ENCODE measurements at regions of chr3 and their contacts with region 1.

Region 1: DNA sequence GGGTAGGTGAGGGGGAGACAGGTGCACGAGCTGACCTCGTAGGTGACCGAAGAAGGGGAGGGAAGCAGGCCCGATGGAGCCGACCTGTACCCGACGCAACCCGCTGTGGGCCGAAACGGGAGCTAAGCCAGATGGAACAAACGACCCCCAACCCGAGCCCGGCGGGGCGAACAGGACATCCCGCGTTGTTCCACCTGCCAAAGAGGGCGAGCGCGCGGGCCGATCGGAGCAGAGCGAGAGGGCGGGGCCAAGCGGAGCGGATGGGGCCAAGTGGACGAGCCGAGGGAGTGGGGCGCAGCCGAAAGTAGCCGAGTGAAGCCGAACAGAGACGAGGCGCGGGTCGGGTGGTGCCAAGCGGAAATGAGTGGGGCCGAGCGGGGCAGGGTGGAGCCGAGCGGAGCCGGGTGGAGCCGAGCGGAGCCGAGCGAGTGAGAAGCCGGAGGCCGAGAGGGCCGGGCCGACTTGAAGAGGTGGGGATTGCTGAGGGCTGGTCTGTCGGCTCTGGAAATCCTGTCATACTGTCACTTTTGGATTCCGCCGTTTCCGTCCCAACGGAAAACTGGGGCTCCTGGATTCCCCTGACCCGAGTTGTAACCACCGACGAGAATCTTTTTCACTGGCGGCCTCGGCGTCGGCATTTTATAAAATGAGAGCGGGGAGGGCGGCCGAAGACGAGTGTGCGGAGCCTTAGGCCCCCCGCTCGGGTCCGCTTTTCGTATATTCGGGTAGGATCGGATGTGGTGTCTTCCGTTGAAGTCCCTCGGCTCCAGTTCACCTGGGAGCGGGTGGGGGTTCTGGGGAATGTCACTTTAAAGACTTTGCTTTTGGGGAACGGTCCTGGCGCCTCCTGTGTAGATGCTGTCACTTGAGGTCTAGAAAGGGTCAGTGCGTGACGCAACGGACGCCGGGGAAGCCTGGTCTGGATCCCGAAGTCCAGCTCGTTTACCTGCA is 15.6 kb upstream of the WNT7A start:
- DNase-seq: peak; percentile 77 to 86
- ATAC-seq: peak; percentile 88 to 89
- H3K4me3 ChIP-seq: peak overlapping the region; percentile 56 to 80 (median 66)
- H3K27ac ChIP-seq: peak overlapping the region; percentile 16 to 71 (median 49)
- H3K4me1 ChIP-seq: peaks cover 9 to 12% of the 10 kb centered on the region in 2 donors
- H3K27me3 ChIP-seq: peaks cover 0 to 2% (median 0%) of the 10 kb centered on the region in 3 donors
- CTCF ChIP-seq: no peak
- POLR2A ChIP-seq: peak; percentile 68 to 70

Region 2: DNA sequence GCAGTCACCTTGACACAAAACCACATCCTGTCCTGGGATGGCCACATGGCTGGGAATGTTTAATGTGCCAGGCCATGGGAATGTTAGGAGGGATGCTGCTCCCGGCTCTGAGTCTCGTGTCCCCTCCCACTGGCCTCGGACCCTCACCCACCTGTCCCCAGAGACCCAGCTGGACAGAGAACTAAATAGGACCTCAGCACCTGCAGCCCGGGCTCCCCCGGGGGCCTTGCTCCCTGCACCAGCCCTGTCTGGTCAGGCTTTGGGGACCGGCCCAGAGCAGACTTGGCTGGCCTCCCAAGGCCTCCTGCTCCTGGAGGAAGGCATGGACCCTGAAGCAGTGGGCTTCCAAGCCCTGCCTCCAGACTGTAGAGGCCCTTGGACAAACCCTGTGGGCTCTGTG is 722.2 kb before region 1 on chr3:
- in situ Hi-C with region 1: no loop called
- intact Hi-C with region 1: no loop called
- DNase-seq: no peak
- ATAC-seq: no peak
- H3K4me3 ChIP-seq: no peak overlapping the region
- H3K27ac ChIP-seq: no peak overlapping the region
- H3K4me1 ChIP-seq: no peaks in the 10 kb centered on the region
- H3K27me3 ChIP-seq: no peaks in the 10 kb centered on the region
- CTCF ChIP-seq: no peak
- POLR2A ChIP-seq: no peak

Region 3: DNA sequence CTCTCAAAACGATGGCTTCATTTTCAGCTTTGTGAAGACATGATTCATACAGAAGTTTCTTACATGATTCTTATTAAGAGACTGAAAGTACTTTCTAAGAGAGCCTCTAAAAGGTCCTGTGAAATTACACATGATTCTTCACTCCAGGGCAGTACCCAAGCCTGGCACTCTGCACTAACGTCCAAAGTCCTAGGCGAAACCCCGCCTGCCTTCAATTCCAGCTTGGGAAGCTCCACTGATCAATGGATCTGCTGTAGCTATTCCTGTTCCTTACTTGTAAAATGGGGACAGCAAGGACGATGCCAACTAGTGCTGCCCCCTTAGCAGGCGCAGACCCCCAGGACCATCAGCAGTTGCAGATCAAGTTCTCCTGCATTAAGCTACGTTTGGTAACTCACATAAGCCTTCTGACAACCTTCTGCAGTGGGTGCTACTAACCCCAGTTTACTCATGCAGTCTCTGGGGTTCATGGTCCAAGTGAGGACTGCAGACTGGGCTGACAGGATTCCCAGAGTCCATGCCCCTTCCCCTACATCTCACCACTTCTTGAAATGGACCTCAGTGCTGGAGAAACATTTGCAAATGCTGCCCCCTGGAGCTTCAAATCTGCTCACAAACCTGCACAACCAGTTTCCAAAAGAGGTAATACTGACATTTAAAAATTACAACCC is 218.7 kb after region 1 on chr3:
- in situ Hi-C with region 1: loop called in 1 of 4 experiments (anchors 10 kb)
- intact Hi-C with region 1: no loop called
- DNase-seq: no peak
- ATAC-seq: no peak
- H3K4me3 ChIP-seq: no peak overlapping the region
- H3K27ac ChIP-seq: no peak overlapping the region
- H3K4me1 ChIP-seq: no peaks in the 10 kb centered on the region
- H3K27me3 ChIP-seq: no peaks in the 10 kb centered on the region
- CTCF ChIP-seq: peak in 1 of 5 experiments; percentile 18
- POLR2A ChIP-seq: no peak

Region 4: DNA sequence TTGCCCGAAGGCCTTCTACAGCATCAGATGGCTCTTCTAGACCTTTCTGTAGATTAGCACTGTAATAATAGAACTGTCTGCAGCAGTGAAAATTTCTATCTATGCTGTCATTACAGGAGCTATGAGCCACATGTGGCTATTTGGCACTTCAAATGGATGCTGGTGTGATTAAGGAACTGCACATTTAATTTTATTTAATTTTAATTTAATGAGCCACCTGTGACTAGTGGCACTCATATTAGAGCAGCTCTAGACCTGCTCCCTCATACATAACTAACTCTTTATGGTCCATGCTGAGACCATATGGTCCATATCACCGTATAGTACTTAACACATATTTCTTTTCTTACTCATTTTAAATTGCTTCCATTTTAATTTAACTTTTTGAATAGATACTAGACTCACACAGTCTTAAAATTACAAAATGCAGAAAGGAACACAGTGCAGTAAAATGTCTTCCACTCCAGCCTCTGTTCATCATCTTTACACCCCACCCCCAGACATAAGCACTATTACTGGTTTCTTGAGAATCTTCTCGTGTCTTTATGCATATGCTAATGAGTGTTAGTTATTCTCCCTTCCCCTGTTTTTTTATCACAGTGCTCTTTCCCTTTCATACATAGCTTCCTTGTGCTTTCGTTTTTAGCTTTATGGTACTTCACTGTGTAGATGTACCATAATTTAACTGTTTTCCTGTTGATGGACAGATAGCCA is 292.8 kb after region 1 on chr3:
- in situ Hi-C with region 1: loop called in 1 of 4 experiments (anchors 10 kb)
- intact Hi-C with region 1: no loop called
- DNase-seq: no peak
- ATAC-seq: no peak
- H3K4me3 ChIP-seq: no peak overlapping the region
- H3K27ac ChIP-seq: no peak overlapping the region
- H3K4me1 ChIP-seq: no peaks in the 10 kb centered on the region
- H3K27me3 ChIP-seq: no peaks in the 10 kb centered on the region
- CTCF ChIP-seq: no peak
- POLR2A ChIP-seq: no peak

Region 5: DNA sequence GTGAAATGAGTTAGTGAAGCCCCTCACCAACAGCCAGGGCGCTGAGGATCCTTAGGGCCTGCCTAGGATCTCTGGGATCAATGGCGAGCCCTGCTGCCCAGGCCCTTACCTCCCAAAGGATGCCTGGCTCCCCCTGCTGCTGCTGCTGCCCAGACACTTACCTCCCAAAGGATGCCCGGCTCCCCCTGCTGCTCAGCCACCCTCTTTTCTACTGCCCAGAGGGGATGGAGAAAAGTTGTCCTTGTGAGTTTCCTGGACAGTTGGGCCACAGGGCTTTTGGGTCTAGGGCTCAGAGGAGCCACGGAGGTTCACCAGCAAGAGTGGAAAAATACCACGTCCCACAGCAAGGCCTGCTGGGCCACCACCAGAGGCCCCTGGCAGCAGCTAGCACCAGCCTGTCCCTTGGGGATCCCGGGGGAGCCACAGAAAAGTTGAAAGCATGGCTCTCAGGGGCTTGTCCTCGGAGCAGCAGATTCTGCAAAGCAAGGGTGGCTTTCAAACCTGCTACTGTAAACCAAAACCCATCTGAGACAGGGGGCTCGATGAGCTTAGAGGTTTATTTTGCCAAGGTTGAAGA is 566.4 kb after region 1 on chr3:
- in situ Hi-C with region 1: loop called in 2 of 4 experiments (anchors 25 kb)
- intact Hi-C with region 1: loop called (anchors 10 kb)
- DNase-seq: no peak
- ATAC-seq: no peak
- H3K4me3 ChIP-seq: no peak overlapping the region
- H3K27ac ChIP-seq: no peak overlapping the region
- H3K4me1 ChIP-seq: peaks cover 11% of the 10 kb centered on the region in 2 donors
- H3K27me3 ChIP-seq: no peaks in the 10 kb centered on the region
- CTCF ChIP-seq: peak in 3 of 5 experiments; percentile 35 to 39 (median 39)
- POLR2A ChIP-seq: no peak

Region 6: GRCh38 chr3:14480207-14481025 is 585.0 kb after region 1 on chr3:
- in situ Hi-C with region 1: loop called in 1 of 4 experiments (anchors 25 kb)
- intact Hi-C with region 1: no loop called
- DNase-seq: no peak
- ATAC-seq: no peak
- H3K4me3 ChIP-seq: no peak overlapping the region
- H3K27ac ChIP-seq: no peak overlapping the region
- H3K4me1 ChIP-seq: peaks cover 0 to 4% of the 10 kb centered on the region in 2 donors
- H3K27me3 ChIP-seq: no peaks in the 10 kb centered on the region
- CTCF ChIP-seq: no peak
- POLR2A ChIP-seq: no peak